H1 (cell line): ENCODE measurements at regions of chr15 and their contacts with region 1.

Region 1: DNA sequence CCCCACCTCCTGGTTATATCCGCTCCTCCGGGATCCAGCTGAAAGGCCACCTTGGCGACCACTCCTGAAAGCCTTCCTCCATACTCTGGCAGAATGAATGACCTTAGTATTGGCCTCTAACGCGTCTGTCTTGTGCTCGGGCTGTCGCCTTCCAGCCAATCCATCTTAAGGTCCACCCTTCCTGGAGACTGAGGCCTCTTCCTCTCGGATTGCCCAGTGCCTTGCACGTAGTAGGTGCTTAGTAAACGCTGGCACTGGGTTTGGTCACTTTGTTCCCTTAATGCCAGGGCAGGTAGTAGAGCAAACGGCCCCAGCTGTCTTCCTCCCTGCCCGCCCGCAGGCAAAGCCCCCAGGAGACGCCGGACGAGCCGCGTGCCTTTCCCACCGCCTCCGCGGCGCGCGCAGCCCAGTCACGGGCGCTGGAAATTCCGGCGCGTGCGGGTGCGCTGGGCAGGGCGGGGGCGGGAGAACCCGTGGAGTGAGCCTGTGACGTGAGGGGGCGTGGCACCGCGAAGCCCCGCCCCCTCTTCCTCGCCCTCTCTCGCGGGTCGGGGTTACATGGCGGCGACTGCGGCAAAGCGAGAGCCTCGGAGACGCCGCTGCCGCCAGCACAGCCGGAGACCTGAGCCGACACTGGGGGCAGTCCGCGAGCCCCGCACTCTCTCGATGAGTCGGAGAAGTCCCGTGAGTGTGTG is at the start of gene MAPK6:
- DNase-seq: peak; percentile 73 to 95
- H3K4me3 ChIP-seq: peak within 1 kb of the TSS; percentile 76 to 96 (median 92)
- H3K27ac ChIP-seq: peak within 1 kb of the TSS; percentile 89
- H3K4me1 ChIP-seq: peaks cover 2 to 12% (median 4%) of the 10 kb centered on the region in 4 experiments; a peak in 5 of 7 replicates
- H3K27me3 ChIP-seq: no peaks in the 10 kb centered on the region
- CTCF ChIP-seq: no peak
- EP300 ChIP-seq: no peak
- POLR2A ChIP-seq: peak; percentile 86 to 95
- RAD21 ChIP-seq: no peak
- total RNA-seq, gene MAPK6: 108 and 115 TPM in 2 replicates

Region 2: DNA sequence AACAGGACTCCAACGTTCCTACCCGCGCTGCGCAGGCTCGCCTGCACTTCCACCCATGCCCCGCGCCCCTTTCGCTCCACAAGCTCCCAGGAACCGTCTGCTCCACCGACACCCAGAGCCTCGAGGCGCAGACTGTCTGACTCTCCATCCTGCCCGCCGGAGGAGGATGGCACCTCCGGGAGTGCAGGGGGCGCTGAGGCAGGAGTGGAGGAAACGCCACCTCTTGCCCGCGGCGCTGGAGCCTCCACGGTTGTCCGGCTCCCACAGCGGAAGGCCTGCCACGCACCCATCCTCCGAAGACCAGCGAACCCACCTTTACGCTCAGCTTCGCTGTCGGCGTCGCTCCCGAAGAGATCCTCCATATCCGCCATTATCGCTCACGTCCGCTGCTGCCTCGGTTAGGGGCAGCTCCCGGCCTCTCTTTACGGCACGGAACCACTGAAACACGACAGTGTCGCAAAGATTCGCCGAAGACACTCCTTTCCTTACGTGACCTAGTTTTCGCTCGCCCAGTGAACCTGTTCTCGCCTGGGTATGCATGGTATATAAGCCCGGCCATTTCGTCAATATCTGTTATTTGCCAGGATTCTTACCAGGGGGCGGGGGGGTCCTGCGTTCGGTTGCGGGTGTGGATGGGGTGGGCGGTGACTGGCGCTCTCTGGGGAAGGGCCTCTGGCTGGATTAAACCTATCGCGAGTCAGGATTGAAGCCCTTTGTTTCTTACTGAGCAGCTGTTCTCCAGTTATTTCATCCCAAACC is 47.3 kb before region 1 on chr15 and contains the start of gene LEO1:
- CTCF ChIA-PET with region 1: interaction called, 4 read pairs
- POLR2A ChIA-PET with region 1: interaction called, 17 read pairs
- DNase-seq: peak; percentile 81 to 83
- H3K4me3 ChIP-seq: peak within 1 kb of the TSS; percentile 92 to 100 (median 100)
- H3K27ac ChIP-seq: peak within 1 kb of the TSS; percentile 97
- H3K4me1 ChIP-seq: no peaks in the 10 kb centered on the region; a peak in 1 of 7 replicates
- H3K27me3 ChIP-seq: no peaks in the 10 kb centered on the region
- CTCF ChIP-seq: peak in 2 of 3 experiments; percentile 23 to 27; a peak in 2 of 4 replicates
- EP300 ChIP-seq: no peak
- POLR2A ChIP-seq: peak; percentile 74 to 86
- RAD21 ChIP-seq: no peak
- total RNA-seq, gene LEO1: 27.4 and 29.2 TPM in 2 replicates

Region 3: GRCh38 chr15:52031566-52031965 is 12.7 kb after region 1 on chr15:
- CTCF ChIA-PET with region 1: interaction called, 11 read pairs
- POLR2A ChIA-PET with region 1: interaction called, 21 read pairs
- DNase-seq: no peak
- H3K4me3 ChIP-seq: no peak overlapping the region
- H3K27ac ChIP-seq: no peak overlapping the region
- H3K4me1 ChIP-seq: peaks cover 0 to 5% (median under 1%) of the 10 kb centered on the region in 4 experiments; a peak in 1 of 7 replicates
- H3K27me3 ChIP-seq: no peaks in the 10 kb centered on the region
- CTCF ChIP-seq: no peak
- EP300 ChIP-seq: no peak
- POLR2A ChIP-seq: no peak
- RAD21 ChIP-seq: no peak

Region 4: GRCh38 chr15:52039925-52040781 is 21.3 kb after region 1 on chr15:
- CTCF ChIA-PET with region 1: interaction called, 7 read pairs
- POLR2A ChIA-PET with region 1: interaction called, 15 read pairs
- DNase-seq: no peak
- H3K4me3 ChIP-seq: no peak overlapping the region
- H3K27ac ChIP-seq: 0 out of 2 replicates have a peak overlapping the region, but pooled peaks have one; percentile 16
- H3K4me1 ChIP-seq: peaks cover 0 to 10% (median 6%) of the 10 kb centered on the region in 4 experiments; a peak in 5 of 7 replicates
- H3K27me3 ChIP-seq: no peaks in the 10 kb centered on the region
- CTCF ChIP-seq: no peak
- EP300 ChIP-seq: no peak
- POLR2A ChIP-seq: no peak
- RAD21 ChIP-seq: no peak

Region 5: DNA sequence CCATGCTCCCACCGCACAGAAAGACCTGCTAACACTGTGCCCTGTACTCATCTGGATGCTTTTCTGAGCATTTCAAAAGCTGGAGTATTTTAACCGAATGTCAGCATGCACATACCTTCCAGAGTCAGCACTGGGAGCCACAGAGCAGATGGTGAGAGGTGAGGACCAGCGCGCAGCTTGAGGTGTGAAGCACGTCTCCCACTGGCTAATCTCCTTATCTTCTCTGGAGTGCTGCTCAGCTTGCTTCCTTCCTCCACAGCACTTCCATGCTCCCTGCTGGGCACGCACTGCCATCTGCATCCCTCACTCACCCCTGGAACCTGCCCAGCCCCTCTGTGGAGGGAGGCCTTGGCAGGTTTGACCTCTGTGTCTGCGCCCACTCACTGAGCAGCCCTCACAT is 172.4 kb after region 1 on chr15 and contains the start of gene GNB5:
- CTCF ChIA-PET with region 1: no interaction called
- POLR2A ChIA-PET with region 1: no interaction called
- DNase-seq: no peak
- H3K4me3 ChIP-seq: no peak within 1 kb of the TSS
- H3K27ac ChIP-seq: no peak within 1 kb of the TSS
- H3K4me1 ChIP-seq: no peaks in the 10 kb centered on the region; a peak in 1 of 7 replicates
- H3K27me3 ChIP-seq: no peaks in the 10 kb centered on the region
- CTCF ChIP-seq: no peak
- EP300 ChIP-seq: no peak
- POLR2A ChIP-seq: no peak
- RAD21 ChIP-seq: no peak
- total RNA-seq, gene GNB5: 37.7 and 42.5 TPM in 2 replicates